GM18951 (cell line): ENCODE measurements at regions of chr11 and their contacts with region 1.

Region 1: GRCh38 chr11:113305440-113306336 is 8.7 kb upstream of the TTC12 start:
- POLR2A ChIP-seq: no peak

Region 2: DNA sequence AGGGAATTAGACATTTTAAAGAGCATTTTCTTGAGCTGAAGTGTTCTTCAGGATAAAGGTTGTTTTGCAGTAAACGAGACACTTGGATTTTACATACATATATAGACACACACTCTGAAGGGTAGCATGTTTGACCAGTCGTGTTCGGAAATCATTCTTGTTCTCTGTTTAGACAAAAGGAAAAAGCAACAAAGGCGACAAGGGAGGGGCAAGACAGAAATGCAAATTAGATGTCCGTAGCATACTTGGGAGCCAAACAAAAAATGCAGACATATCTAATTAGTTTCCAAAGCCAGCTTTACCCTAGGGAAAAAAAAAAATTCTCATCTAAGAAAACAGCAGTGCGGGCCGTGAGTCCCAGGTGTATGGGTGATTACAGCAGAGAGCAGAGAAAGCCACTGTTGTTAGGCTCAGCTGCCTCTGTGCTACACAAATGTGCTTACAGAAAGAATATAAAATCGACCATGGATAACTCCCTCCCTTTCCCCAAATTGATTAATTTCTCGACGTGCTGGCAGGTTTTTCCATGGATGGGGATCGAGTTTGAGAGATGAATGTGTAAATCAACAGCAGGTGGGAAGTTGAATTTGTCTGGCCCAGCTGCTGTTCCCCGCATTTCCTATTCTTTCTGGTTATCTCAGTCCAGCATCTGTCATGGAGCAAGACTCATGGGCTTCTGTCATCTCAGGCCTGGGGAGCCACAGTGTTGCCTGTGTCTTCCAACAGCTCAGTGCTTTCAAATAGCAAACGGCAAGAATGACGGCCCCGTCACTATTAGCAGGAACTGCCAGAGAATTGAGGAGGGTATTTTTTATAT is 167.8 kb before region 1 on chr11:
- in situ Hi-C with region 1: no loop called
- POLR2A ChIP-seq: no peak

Region 3: GRCh38 chr11:113532697-113533424 is 227.2 kb after region 1 on chr11:
- in situ Hi-C with region 1: loop called (anchors 10 kb)
- POLR2A ChIP-seq: no peak